ENCODE measurements at regions of chr2 and their contacts with region 1.

Region 1: DNA sequence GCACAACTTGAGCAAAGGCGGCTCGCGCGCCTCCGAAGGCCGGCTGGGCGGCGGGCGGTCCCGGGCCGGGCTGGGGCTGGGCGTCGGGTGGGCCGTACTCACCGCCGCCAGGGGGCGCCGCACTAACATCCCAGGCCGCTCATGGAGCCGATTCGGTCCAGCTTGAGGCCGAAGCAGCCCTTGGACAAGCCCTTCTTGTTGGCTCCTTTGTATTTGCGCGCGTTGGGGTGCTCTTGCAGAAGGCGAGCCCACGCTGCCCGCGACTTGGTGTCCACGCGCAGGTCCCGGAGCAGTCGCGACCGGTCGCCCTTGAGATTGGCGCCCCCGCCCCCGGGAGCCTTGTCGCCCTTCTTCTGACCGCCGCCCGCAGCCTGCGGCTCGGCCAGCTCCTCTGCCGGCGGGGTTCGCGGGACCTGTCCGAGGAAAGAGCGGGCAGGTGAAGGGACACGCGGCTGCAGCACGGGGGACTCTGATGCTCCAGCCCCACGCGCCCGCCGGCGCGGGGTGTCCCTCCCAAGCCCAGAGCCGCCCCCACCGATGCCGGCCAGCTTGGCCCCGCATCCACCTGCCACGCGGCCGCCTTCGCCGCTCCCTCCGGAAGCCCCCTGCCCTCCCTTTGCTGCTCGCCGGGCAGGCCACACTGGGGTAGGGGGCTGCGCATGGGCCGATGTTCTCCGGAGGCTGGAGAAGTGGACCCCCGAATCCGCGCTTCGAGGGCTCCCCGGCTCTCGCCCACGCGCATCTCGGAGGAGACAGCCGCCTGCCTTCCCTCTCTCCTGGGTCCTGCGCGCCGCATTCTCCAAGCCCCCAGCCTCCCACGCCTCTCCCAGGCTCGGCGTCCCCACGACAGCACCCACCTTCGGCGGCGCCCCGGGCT is 655 bp downstream of the NPPC start:
- DNase-seq: peak; percentile 90
- H3K4me3 ChIP-seq: peak overlapping the region; percentile 13 to 48 (median 38)
- H3K27ac ChIP-seq: no peak overlapping the region
- H3K4me1 ChIP-seq: peaks cover 0 to 29% (median 20%) of the 10 kb centered on the region in 4 donors
- H3K27me3 ChIP-seq: peaks cover 15 to 85% (median 44%) of the 10 kb centered on the region in 3 donors
- CTCF ChIP-seq: peak; percentile 37 to 91 (median 67)
- EP300 ChIP-seq: no peak
- POLR2A ChIP-seq: no peak

Region 2: DNA sequence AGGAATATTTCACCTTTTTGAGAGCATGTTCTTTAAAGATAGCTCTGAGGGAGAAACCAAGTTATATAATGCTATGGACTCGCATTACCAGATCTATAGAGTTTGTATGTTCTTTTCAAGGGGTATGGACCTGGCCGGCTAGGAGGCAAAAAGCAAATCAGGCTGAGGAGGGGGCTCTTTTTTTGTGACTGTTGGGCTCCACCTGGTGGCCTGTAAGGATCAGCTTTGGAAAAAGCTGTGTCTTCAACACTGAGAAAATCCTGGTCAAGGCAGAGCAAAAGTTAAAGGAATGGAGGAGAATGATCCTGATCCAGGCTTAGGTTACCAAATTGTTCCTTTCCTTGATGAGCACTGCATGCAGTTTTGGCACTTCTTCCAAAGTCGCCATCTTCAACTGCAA is 216.5 kb after region 1 on chr2:
- intact Hi-C with region 1: loop called (anchors 1 kb)
- DNase-seq: no peak
- H3K4me3 ChIP-seq: no peak overlapping the region
- H3K27ac ChIP-seq: no peak overlapping the region
- H3K4me1 ChIP-seq: no peaks in the 10 kb centered on the region
- H3K27me3 ChIP-seq: no peaks in the 10 kb centered on the region
- CTCF ChIP-seq: peak; percentile 25 to 40 (median 34)
- EP300 ChIP-seq: no peak
- POLR2A ChIP-seq: no peak

Region 3: GRCh38 chr2:232327105-232328041 is 401.8 kb after region 1 on chr2:
- intact Hi-C with region 1: loop called (anchors 2 kb)
- DNase-seq: peak; percentile 72
- H3K4me3 ChIP-seq: no peak overlapping the region
- H3K27ac ChIP-seq: no peak overlapping the region
- H3K4me1 ChIP-seq: no peaks in the 10 kb centered on the region
- H3K27me3 ChIP-seq: no peaks in the 10 kb centered on the region
- CTCF ChIP-seq: peak; percentile 57 to 76 (median 72)
- EP300 ChIP-seq: no peak
- POLR2A ChIP-seq: no peak

Region 4: GRCh38 chr2:232444409-232445148 is 519.0 kb after region 1 on chr2:
- intact Hi-C with region 1: loop called (anchors 5 kb)
- DNase-seq: no peak
- H3K4me3 ChIP-seq: no peak overlapping the region
- H3K27ac ChIP-seq: no peak overlapping the region
- H3K4me1 ChIP-seq: peaks cover 0 to 3% (median 0%) of the 10 kb centered on the region in 4 donors
- H3K27me3 ChIP-seq: peaks cover 0 to 4% (median 0%) of the 10 kb centered on the region in 3 donors
- CTCF ChIP-seq: peak in 2 of 4 experiments; percentile 15 to 18
- EP300 ChIP-seq: no peak
- POLR2A ChIP-seq: no peak